ENCODE measurements at regions of chr1 and their contacts with region 1.

Region 1: GRCh38 chr1:17606826-17607440 is 67.4 kb downstream of the ARHGEF10L start:
- DNase-seq: peak; percentile 86
- ATAC-seq: peak; percentile 64

Region 2: DNA sequence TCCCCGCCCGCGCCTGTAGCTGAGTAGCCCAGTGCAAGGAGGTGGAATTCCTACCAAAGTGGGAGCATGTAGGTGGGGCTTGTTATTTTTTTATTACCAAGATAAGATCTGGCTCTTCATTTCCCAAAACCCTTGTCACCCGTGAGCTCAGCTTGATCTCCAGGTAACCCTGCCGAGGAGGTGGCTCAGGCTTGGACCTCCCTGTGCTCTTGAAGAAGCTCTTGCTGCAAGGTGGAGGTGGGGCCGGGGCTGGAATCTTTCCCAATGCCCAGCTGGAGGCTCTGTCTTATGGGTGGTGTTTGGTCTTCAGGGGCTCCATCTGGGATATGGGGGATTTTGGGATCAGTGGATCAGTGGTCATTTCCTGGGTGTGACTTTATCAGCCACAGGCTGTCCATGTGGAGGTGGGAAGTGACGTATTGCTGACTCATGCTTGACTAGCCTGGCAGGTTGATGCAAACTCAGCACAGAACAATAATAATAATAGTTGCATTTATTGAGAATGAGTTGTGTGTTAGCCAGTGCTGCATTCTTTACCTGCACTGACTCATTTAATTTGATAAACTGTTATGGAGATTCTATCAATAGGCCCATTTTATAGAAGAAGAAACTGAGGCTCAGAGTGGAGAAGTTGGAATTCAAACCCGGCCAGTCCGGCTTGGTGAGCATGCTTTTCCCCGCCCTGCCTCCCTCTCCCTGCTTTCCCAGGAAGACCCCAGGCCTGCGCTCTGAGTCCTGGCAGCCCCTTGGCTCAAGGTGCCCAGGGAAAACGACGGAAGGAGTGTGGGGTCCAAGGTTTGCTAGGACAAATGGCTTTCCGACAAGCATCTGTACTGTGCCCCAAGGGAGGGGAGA is 258.6 kb before region 1 on chr1:
- intact Hi-C with region 1: no loop called
- DNase-seq: no peak
- ATAC-seq: no peak

Region 3: GRCh38 chr1:17502326-17502778 is 104.6 kb before region 1 on chr1:
- intact Hi-C with region 1: loop called (anchors 5 kb)
- DNase-seq: peak; percentile 93
- ATAC-seq: peak; percentile 98

Region 4: DNA sequence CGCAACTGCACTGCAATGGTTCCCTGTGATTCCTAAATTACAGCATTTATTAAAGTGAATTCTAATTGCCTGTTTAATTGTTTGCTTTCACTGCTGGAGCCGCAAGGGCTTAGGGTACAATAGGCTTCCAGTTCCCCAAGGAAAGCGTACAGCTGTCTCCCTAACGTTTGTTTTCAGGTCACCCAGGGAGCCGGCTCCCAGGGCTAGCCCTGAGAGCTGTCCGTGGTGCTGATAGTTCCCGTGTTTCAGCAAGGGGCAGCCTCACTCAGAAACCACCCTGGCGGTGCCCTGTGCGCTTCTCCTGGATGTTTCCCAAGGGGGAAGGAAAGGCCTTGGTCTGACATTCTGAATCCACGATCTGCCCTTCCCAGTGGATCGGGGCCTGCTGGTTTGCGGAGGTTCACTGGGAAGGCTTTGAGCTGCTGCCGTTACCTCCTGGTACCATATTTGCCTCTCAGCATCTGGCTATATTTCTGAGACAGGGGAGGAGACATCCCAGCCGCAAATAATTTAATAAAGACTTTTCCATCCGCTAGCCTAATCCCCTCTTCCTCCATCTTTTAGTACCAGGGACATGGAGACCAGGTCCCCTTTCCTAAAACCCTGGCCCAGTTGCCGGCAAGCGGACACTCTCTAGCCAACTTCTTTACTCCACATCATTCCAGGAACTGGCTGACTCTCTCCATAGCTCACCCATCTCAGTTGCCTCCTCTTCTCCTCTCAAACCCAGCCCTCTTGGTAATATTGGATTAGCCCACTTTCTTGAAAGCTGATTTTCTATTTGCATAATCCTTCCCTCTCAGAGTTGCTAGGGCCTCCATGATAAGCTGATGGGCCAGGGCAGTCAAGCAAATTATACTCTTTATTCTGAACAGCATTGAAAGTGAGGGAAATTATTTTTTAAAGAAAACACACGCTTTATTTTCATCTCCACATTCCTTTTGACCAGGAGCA is 649.6 kb after region 1 on chr1:
- intact Hi-C with region 1: no loop called
- DNase-seq: peak; percentile 61
- ATAC-seq: peak; percentile 44